Esophagus muscularis mucosa (tissue), 4 donors: ENCODE measurements at regions of chr10 and their contacts with region 1.

Region 1: GRCh38 chr10:67779465-67780203 is 58.4 kb downstream of the DNAJC12 start:
- DNase-seq: no peak
- H3K4me3 ChIP-seq: no peak overlapping the region
- H3K27ac ChIP-seq: peak overlapping the region in 1 of 4 donors; percentile 6
- H3K4me1 ChIP-seq: peaks cover 0 to 12% (median 9%) of the 10 kb centered on the region in 4 donors
- H3K27me3 ChIP-seq: no peaks in the 10 kb centered on the region
- CTCF ChIP-seq: peak; percentile 76 to 89 (median 82)
- EP300 ChIP-seq: no peak
- POLR2A ChIP-seq: no peak

Region 2: DNA sequence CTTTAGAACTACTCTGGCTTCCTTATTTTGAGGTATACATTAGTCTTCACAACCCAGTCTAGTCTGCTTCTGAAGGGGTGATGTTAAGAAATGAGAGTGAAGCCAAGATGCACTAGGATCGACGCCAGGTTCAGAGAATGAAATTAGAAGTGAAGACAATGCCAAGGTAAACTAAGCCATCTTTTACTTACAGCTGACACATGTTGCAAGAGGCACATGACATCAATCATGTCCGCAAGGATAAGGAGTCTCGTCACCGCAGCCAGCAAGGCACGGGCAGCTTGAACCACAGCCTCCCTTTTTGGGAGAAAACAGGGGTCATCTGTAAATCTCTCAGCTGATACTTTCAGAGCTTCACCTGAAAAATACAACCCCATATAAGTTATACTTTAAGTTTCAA is 240.3 kb before region 1 on chr10:
- intact Hi-C with region 1: no loop called
- DNase-seq: no peak
- H3K4me3 ChIP-seq: no peak overlapping the region
- H3K27ac ChIP-seq: no peak overlapping the region
- H3K4me1 ChIP-seq: peaks cover 0 to 8% (median 3%) of the 10 kb centered on the region in 4 donors
- H3K27me3 ChIP-seq: no peaks in the 10 kb centered on the region
- CTCF ChIP-seq: no peak
- EP300 ChIP-seq: no peak
- POLR2A ChIP-seq: no peak

Region 3: GRCh38 chr10:67668448-67668847 is 111.2 kb before region 1 on chr10:
- intact Hi-C with region 1: loop called (anchors 2 kb)
- DNase-seq: no peak
- H3K4me3 ChIP-seq: no peak overlapping the region
- H3K27ac ChIP-seq: no peak overlapping the region
- H3K4me1 ChIP-seq: peaks cover 0 to 46% (median 42%) of the 10 kb centered on the region in 4 donors
- H3K27me3 ChIP-seq: no peaks in the 10 kb centered on the region
- CTCF ChIP-seq: no peak
- EP300 ChIP-seq: no peak
- POLR2A ChIP-seq: no peak

Region 4: GRCh38 chr10:67697724-67698131 is 81.9 kb before region 1 on chr10:
- intact Hi-C with region 1: loop called (anchors 2 kb)
- DNase-seq: no peak
- H3K4me3 ChIP-seq: no peak overlapping the region
- H3K27ac ChIP-seq: no peak overlapping the region
- H3K4me1 ChIP-seq: peaks cover 6 to 31% (median 26%) of the 10 kb centered on the region in 4 donors
- H3K27me3 ChIP-seq: no peaks in the 10 kb centered on the region
- CTCF ChIP-seq: peak; percentile 62 to 79 (median 66)
- EP300 ChIP-seq: no peak
- POLR2A ChIP-seq: no peak